Activated naive CD4-positive, alpha-beta T cell treated with anti-CD3 and anti-CD28 coated beads for 36 hours (primary cell): ENCODE measurements at regions of chr20 and their contacts with region 1.

Region 1: DNA sequence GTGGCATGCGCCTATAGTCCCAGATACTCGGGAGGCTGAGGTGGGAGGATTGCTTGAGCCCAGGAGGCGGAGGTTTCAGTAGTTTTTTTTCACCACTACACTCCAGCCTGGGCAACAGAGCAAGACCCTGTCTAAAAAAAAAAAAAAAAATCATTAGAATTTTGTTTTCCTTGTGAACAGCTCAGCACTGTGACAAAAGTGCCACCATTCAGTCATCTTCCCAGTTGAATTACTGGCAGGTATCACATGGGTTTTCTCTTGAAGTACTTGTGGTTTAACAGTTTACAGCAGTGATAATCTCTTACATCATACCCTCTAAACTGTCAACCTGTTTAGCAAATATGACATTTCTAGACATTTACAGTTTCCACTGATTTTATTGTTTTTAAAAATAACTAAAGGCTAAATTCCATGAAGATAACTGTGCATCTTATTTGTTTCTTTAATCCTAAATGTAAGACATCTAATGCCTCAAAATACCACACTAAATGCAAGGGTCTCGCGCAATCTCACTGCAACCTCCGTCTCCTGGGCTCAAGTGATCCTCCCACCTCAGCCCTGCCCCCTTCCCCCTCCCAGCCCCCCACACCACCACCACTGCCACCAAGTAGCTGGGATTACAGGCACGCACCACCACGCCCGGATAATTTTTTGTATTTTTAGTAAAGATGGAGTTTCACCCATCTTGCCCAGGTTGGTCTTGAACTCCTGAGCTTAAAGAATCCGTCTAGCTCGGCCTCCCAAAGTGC is 7.0 kb downstream of the TRPC4AP start:
- DNase-seq: peak; percentile 48
- H3K4me3 Mint-ChIP-seq: no peak overlapping the region
- H3K27ac Mint-ChIP-seq: peak overlapping the region; percentile 80
- H3K4me1 Mint-ChIP-seq: peaks cover 54% of the 10 kb centered on the region
- H3K27me3 Mint-ChIP-seq: no peaks in the 10 kb centered on the region

Region 2: GRCh38 chr20:35055445-35056276 is 30.0 kb before region 1 on chr20:
- CTCF ChIA-PET with region 1: interaction called, 5 read pairs
- intact Hi-C with region 1: loop called (anchors 1 kb)
- DNase-seq: peak; percentile 8
- H3K4me3 Mint-ChIP-seq: peak overlapping the region; percentile 22
- H3K27ac Mint-ChIP-seq: peak overlapping the region; percentile 93
- H3K4me1 Mint-ChIP-seq: peaks cover 36% of the 10 kb centered on the region
- H3K27me3 Mint-ChIP-seq: no peaks in the 10 kb centered on the region